Adrenal gland (tissue), 19 donors: ENCODE measurements at regions of chr1 and their contacts with region 1.

Region 1: DNA sequence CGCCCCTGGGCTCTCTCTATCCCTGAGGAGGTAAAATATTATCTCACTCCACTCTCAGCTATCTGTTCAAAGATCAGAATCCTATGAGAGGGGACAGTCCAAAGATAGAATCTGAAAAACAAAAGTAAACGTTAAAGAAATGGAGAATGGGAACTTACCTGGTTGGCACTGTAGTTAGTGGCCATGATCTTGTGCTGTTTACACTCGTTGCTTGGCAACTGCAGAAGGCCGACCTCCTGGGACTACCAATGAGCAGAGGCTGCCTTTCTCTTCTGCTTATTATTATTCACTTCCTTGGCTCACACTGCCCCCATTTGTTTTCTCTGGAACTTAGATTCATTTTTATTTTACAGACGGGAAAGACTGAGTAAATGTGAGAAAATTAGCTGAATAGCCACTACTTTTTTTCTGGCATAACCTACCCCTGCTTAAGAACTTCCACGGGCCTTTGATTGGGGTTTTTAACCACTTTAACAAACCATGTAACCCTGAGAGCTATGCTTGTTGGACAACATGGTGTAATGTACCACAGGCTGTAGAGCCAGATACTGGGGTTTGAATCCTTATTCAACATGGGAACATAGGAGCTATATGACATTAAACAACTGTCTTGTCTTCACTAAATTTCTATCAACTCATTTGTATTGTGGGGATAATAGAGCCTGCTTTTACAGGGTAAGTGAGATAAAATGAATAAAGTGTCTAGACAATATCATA is at the start of gene CFAP126:
- DNase-seq: peak; percentile 72 to 92 (median 85)
- H3K4me3 ChIP-seq: no peak within 1 kb of the TSS
- H3K27ac ChIP-seq: peak within 1 kb of the TSS in 2 of 5 donors; percentile 36 to 42
- H3K4me1 ChIP-seq: peaks cover 15 to 22% of the 10 kb centered on the region in 2 donors
- H3K27me3 ChIP-seq: no peaks in the 10 kb centered on the region
- CTCF ChIP-seq: peak; percentile 28 to 69 (median 50)
- POLR2A ChIP-seq: no peak
- total RNA-seq, gene CFAP126: 0.28 TPM in 1 of 9 donors, not detected in the others

Region 2: GRCh38 chr1:161305867-161306519 is 61.8 kb before region 1 on chr1:
- intact Hi-C with region 1: loop called (anchors 5 kb)
- DNase-seq: peak; percentile 74 to 88 (median 78)
- H3K4me3 ChIP-seq: peak overlapping the region; percentile 31 to 74 (median 47)
- H3K27ac ChIP-seq: peak overlapping the region in 4 of 5 donors; percentile 10 to 82 (median 61)
- H3K4me1 ChIP-seq: peaks cover 16 to 25% of the 10 kb centered on the region in 2 donors
- H3K27me3 ChIP-seq: no peaks in the 10 kb centered on the region
- CTCF ChIP-seq: peak in 2 of 6 experiments; percentile 14 to 19
- POLR2A ChIP-seq: peak; percentile 5 to 54